A673 (cell line): ENCODE measurements at regions of chr18 and their contacts with region 1.

Region 1: GRCh38 chr18:72075040-72075439 is 469.1 kb downstream of the CBLN2 start:
- DNase-seq: no peak
- H3K4me3 ChIP-seq: no peak overlapping the region
- H3K27ac ChIP-seq: no peak overlapping the region
- H3K4me1 ChIP-seq: no peaks in the 10 kb centered on the region
- H3K27me3 ChIP-seq: no peaks in the 10 kb centered on the region
- CTCF ChIP-seq: no peak

Region 2: DNA sequence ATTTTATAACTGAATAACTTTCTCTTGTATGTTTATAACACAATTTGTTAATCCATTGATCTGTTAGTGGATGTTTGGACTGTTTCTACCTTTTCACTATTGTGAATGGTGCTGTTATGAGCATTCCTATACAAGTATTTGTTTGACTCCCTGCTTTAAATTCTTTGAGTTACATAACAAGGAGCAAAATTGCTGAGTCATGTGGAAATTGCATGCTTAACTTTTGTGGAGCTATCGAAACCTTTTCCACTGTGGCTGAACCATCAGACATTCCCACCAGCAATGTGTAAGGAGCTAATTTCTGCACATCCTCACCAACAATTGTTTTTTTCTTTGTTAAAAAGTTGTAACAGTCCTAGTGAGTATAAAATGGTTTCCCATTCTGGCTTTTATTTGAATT is 53.6 kb after region 1 on chr18:
- CTCF ChIA-PET with region 1: no interaction called
- POLR2A ChIA-PET with region 1: no interaction called
- intact Hi-C with region 1: loop called (anchors 10 kb)
- DNase-seq: no peak
- H3K4me3 ChIP-seq: no peak overlapping the region
- H3K27ac ChIP-seq: no peak overlapping the region
- H3K4me1 ChIP-seq: no peaks in the 10 kb centered on the region
- H3K27me3 ChIP-seq: no peaks in the 10 kb centered on the region
- CTCF ChIP-seq: no peak

Region 3: GRCh38 chr18:72174972-72175649 is 100.1 kb after region 1 on chr18:
- CTCF ChIA-PET with region 1: no interaction called
- POLR2A ChIA-PET with region 1: no interaction called
- intact Hi-C with region 1: no loop called
- DNase-seq: no peak
- H3K4me3 ChIP-seq: no peak overlapping the region
- H3K27ac ChIP-seq: no peak overlapping the region
- H3K4me1 ChIP-seq: no peaks in the 10 kb centered on the region
- H3K27me3 ChIP-seq: no peaks in the 10 kb centered on the region
- CTCF ChIP-seq: no peak